ENCODE measurements at regions of chr1 and their contacts with region 1.

Region 1: DNA sequence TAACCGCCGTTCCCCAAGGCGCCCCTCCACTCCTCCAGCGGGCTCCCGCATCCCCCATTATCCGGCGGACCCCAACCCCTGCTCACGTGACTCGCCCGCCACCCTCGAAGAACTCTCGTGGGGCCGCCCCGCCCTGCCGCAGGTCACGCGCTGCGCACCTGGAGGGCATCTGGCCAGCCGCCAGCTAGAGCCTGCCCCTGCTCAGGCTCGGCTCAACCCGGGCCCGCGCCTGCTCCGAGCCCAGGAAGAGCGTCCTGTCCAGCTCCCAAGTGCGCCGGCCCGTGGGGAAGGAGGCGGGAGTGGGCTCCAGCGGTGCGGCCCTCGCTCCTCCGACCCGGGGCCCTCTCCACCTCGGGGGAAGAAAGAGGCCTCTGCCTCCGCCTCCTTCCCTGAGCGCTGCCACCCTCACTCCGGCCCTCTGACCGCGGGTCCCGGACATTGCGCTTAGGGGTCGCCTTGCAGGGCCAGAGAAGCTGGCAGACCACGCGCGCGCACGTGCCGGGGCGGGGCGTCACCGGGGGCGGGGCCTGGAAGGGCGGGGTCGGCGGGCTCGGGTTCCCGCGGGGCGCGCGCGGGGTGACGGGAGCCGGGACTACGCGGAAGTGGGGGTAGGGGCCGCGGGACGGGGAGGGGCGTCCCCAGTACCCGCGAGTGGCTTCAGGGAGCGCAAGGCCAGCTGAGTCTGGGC is 28.4 kb downstream of the HMGN2 start:
- DNase-seq: peak; percentile 90
- H3K4me3 ChIP-seq: peak overlapping the region; percentile 75
- H3K27ac ChIP-seq: peak overlapping the region; percentile 84
- H3K4me1 ChIP-seq: peaks cover 25% of the 10 kb centered on the region
- CTCF ChIP-seq: peak; percentile 51; the same call in 1 of the 2 replicates

Region 2: GRCh38 chr1:26302733-26303405 is 197.8 kb before region 1 on chr1:
- CTCF ChIA-PET with region 1: no interaction called
- POLR2A ChIA-PET with region 1: no interaction called
- intact Hi-C with region 1: no loop called
- DNase-seq: no peak
- H3K4me3 ChIP-seq: no peak overlapping the region
- H3K27ac ChIP-seq: peak overlapping the region; percentile 11
- H3K4me1 ChIP-seq: peaks cover 79% of the 10 kb centered on the region
- CTCF ChIP-seq: no peak

Region 3: GRCh38 chr1:26431979-26432695 is 68.5 kb before region 1 on chr1 and contains the start of gene DHDDS:
- CTCF ChIA-PET with region 1: no interaction called
- POLR2A ChIA-PET with region 1: no interaction called
- intact Hi-C with region 1: no loop called
- DNase-seq: peak; percentile 98
- H3K4me3 ChIP-seq: peak within 1 kb of the TSS; percentile 89
- H3K27ac ChIP-seq: peak within 1 kb of the TSS; percentile 38
- H3K4me1 ChIP-seq: peaks cover 33% of the 10 kb centered on the region
- CTCF ChIP-seq: no peak
- total RNA-seq, gene DHDDS: 33.2 and 39.0 TPM in 2 replicates

Region 4: DNA sequence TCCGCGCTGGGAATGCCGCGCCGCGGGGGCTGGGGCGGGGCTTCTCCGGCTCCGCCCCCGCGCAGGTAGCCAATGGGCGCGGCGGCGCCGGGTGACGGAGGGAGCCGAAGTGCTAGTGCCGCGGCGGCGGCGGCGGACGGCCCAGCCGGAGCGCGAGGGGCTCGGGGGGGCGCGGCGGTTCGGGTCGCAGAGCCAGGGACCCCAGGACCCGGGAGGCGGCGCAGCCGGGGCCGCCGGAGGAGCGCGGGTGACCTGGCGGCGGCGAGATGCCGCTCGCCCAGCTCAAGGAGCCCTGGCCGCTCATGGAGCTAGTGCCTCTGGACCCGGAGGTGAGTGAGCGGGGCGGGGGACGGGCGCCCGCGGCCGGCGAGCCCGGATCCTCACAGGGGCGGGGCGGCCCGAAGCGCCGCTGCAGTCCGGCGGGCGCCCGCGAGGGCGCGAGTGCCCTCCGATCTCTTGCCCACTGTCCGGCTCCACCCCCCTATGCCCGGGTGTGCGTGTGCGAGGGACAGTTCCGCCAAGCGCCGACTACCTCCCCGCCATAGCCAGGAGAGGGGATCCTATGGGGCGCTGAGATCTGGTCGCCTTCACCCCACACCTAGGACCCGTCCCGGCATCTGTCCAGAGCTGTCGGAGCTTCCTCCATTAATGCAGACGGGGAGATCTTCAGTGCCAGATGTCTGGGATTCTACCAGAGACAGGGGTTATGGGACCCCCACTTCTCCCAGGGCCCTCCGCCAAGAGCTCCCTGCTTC is 29.2 kb after region 1 on chr1 and contains the start of gene RPS6KA1:
- CTCF ChIA-PET with region 1: no interaction called
- POLR2A ChIA-PET with region 1: interaction called, 6 read pairs
- intact Hi-C with region 1: loop called (anchors 1 kb)
- DNase-seq: peak; percentile 81
- H3K4me3 ChIP-seq: peak within 1 kb of the TSS; percentile 93
- H3K27ac ChIP-seq: peak within 1 kb of the TSS; percentile 55
- H3K4me1 ChIP-seq: peaks cover 43% of the 10 kb centered on the region
- CTCF ChIP-seq: no peak
- total RNA-seq, gene RPS6KA1: 54.1 and 72.2 TPM in 2 replicates

Region 5: GRCh38 chr1:26541816-26542711 is 41.4 kb after region 1 on chr1:
- CTCF ChIA-PET with region 1: interaction called, 4 read pairs
- POLR2A ChIA-PET with region 1: interaction called, 12 read pairs
- intact Hi-C with region 1: loop called (anchors 1 kb)
- DNase-seq: peak; percentile 95
- H3K4me3 ChIP-seq: peak overlapping the region; percentile 64
- H3K27ac ChIP-seq: peak overlapping the region; percentile 97
- H3K4me1 ChIP-seq: peaks cover 97% of the 10 kb centered on the region
- CTCF ChIP-seq: peak; percentile 72

Region 6: GRCh38 chr1:26560403-26560780 is 59.8 kb after region 1 on chr1:
- CTCF ChIA-PET with region 1: no interaction called
- POLR2A ChIA-PET with region 1: no interaction called
- intact Hi-C with region 1: loop called (anchors 2 kb)
- DNase-seq: no peak
- H3K4me3 ChIP-seq: no peak overlapping the region
- H3K27ac ChIP-seq: no peak overlapping the region
- H3K4me1 ChIP-seq: no peaks in the 10 kb centered on the region
- CTCF ChIP-seq: no peak

Measured in OCI-LY7 (cell line).